Activated T-helper 1 cell treated with anti-CD3 and anti-CD28 coated beads, Interleukin-12 subunit alpha, Interleukin-12 subunit beta, Interleukin-2, Interleukin-4 antibody, amounts not matched to agents 30 ng/mL and 10 ng/mL and 1 ng/mL, durations not matched to agents 14 hours and 24 hours and 36 hours (primary cell): ENCODE measurements at regions of chr1 and their contacts with region 1.

Region 1: DNA sequence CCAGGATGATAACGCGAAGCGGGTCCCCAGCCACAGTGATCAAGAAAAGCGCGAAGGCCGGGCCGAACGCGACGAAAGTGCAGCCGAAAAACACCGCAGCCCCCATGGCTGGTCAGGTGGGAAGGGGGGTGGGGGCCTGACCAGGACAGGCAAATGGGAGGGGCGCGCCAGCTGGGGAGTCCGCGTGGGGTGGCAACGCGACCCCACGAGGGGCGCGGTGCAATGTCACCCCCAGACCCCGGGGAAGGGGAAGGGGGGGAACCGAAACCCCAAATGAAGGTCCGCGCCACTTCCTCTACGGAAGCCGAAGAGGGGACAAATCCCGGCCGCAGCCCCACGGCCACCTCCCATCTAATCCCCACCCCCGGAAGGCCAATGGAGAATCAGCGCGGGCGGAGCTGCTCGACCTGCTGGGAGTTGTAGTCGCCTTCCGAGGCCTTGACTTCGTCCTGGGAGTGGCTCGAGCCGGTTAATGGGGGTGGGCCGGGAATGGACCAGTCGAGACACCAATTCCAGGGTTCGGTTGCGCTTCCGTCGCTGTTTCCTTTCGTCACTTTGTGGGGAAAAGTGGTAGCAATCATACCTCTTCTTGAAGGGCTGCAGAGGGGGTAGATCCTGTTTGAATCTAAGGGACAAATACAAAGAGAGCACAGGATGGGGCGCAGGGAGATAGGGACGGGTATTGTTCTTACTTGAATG is at the start of gene APH1A:
- DNase-seq: peak; percentile 94
- H3K4me3 Mint-ChIP-seq: peak within 1 kb of the TSS; percentile 93
- H3K27ac Mint-ChIP-seq: peak within 1 kb of the TSS; percentile 85
- H3K4me1 Mint-ChIP-seq: peaks cover 30% of the 10 kb centered on the region
- H3K27me3 Mint-ChIP-seq: peaks cover 3% of the 10 kb centered on the region
- total RNA-seq, gene APH1A: 102 and 111 TPM in 2 replicates

Region 2: GRCh38 chr1:149933234-149933633 is 335.6 kb before region 1 on chr1:
- intact Hi-C with region 1: no loop called
- DNase-seq: no peak
- H3K4me3 Mint-ChIP-seq: no peak overlapping the region
- H3K27ac Mint-ChIP-seq: no peak overlapping the region
- H3K4me1 Mint-ChIP-seq: peaks cover 57% of the 10 kb centered on the region
- H3K27me3 Mint-ChIP-seq: no peaks in the 10 kb centered on the region

Region 3: GRCh38 chr1:150213170-150214098 is 55.4 kb before region 1 on chr1:
- intact Hi-C with region 1: loop called (anchors 2 kb)
- DNase-seq: peak; percentile 87
- H3K4me3 Mint-ChIP-seq: peak overlapping the region; percentile 90
- H3K27ac Mint-ChIP-seq: peak overlapping the region; percentile 94
- H3K4me1 Mint-ChIP-seq: peaks cover 19% of the 10 kb centered on the region
- H3K27me3 Mint-ChIP-seq: peaks cover 2% of the 10 kb centered on the region

Region 4: GRCh38 chr1:150281837-150282653 is 13.2 kb after region 1 on chr1 and contains the start of gene CIART:
- intact Hi-C with region 1: loop called (anchors 1 kb)
- DNase-seq: peak; percentile 69
- H3K4me3 Mint-ChIP-seq: peak within 1 kb of the TSS; percentile 87
- H3K27ac Mint-ChIP-seq: peak within 1 kb of the TSS; percentile 80
- H3K4me1 Mint-ChIP-seq: peaks cover 38% of the 10 kb centered on the region
- H3K27me3 Mint-ChIP-seq: peaks cover 4% of the 10 kb centered on the region
- total RNA-seq, gene CIART: 3.4 TPM in 2 replicates

Region 5: DNA sequence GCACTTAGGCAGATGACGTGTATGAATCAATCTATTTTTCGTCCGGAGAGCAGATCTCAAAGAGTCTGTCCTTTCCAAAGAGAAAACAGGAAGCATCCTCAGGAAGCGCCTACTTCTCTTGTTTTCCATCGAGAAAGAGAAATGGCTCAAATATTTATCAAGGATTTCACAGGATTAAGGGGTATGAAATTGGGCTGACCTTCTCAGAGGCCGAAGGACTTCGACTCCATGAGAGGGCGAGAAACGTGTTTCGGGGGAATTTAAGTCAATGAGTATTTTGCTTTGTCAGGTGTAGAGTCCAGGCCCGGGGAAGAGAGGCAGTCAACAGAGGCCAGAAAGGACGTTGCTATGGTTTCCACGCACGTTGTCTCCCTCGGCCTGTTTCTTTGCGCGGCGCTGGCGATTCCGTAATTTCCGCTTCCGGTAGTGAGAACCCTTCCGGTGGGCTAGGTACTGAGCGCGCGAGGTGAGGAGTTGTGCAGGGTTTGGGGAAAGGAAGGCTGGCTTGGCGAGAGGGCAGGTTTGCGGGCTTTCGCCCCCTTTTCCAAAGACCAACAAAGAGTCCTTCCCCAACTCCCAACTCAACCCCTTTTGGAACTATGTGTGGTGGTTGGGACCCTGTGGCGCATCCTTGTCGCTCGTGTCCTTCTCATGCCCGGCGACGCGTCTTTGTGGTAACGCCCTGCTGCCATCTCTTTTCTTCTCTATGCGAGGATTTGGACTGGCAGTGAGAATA is 24.7 kb after region 1 on chr1 and contains the start of gene MRPS21:
- intact Hi-C with region 1: loop called (anchors 1 kb)
- DNase-seq: peak; percentile 85
- H3K4me3 Mint-ChIP-seq: peak within 1 kb of the TSS; percentile 93
- H3K27ac Mint-ChIP-seq: peak within 1 kb of the TSS; percentile 98
- H3K4me1 Mint-ChIP-seq: peaks cover 24% of the 10 kb centered on the region
- H3K27me3 Mint-ChIP-seq: no peaks in the 10 kb centered on the region
- total RNA-seq, gene MRPS21: 81.4 and 85.2 TPM in 2 replicates